ENCODE measurements at regions of chr9 and their contacts with region 1.

Region 1: GRCh38 chr9:6054280-6055099 is 39.1 kb upstream of the RANBP6 start:
- DNase-seq: peak; percentile 61
- H3K4me3 Mint-ChIP-seq: no peak overlapping the region
- H3K27ac Mint-ChIP-seq: no peak overlapping the region
- H3K4me1 Mint-ChIP-seq: peaks cover 17% of the 10 kb centered on the region
- H3K27me3 Mint-ChIP-seq: peaks cover 13% of the 10 kb centered on the region

Region 2: GRCh38 chr9:6024020-6024554 is 30.4 kb before region 1 on chr9:
- CTCF ChIA-PET with region 1: interaction called, 10 read pairs
- POLR2A ChIA-PET with region 1: no interaction called
- DNase-seq: peak; percentile 27
- H3K4me3 Mint-ChIP-seq: peak overlapping the region; percentile 24
- H3K27ac Mint-ChIP-seq: no peak overlapping the region
- H3K4me1 Mint-ChIP-seq: peaks cover 7% of the 10 kb centered on the region
- H3K27me3 Mint-ChIP-seq: peaks cover 18% of the 10 kb centered on the region

Region 3: DNA sequence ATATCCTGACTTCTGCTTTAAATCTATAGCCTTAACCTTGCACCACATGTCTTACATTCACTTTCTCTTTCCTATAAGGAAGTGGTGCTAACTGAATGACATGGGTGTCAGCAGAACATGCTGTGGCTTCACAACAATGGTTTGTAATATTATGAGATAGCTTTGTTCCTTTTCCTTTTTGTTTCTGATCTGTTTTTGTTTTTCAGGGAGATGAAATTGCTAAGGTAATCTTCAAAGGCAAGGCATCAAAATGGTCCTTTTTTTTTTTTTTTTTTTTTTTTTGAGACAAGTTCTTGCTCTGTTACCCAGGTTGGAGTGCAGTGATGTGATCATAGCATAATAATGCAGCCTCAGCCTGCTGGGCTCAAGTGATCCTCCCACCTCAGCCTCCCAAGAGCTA is 14.5 kb after region 1 on chr9:
- CTCF ChIA-PET with region 1: interaction called, 14 read pairs
- POLR2A ChIA-PET with region 1: no interaction called
- DNase-seq: peak; percentile 30
- H3K4me3 Mint-ChIP-seq: no peak overlapping the region
- H3K27ac Mint-ChIP-seq: peak overlapping the region; percentile 70
- H3K4me1 Mint-ChIP-seq: peaks cover 17% of the 10 kb centered on the region
- H3K27me3 Mint-ChIP-seq: no peaks in the 10 kb centered on the region

Region 4: GRCh38 chr9:6305954-6306563 is 251.6 kb after region 1 on chr9:
- CTCF ChIA-PET with region 1: interaction called, 29 read pairs
- POLR2A ChIA-PET with region 1: no interaction called
- DNase-seq: no peak
- H3K4me3 Mint-ChIP-seq: no peak overlapping the region
- H3K27ac Mint-ChIP-seq: no peak overlapping the region
- H3K4me1 Mint-ChIP-seq: no peaks in the 10 kb centered on the region
- H3K27me3 Mint-ChIP-seq: peaks cover 24% of the 10 kb centered on the region

Measured in activated CD4-positive, alpha-beta memory T cell treated with anti-CD3 and anti-CD28 coated beads, Interleukin-2, amount 10 ng/mL, durations not matched to agents 7 days and 5 days (primary cell).